ENCODE measurements at regions of chr9 and their contacts with region 1.

Region 1: DNA sequence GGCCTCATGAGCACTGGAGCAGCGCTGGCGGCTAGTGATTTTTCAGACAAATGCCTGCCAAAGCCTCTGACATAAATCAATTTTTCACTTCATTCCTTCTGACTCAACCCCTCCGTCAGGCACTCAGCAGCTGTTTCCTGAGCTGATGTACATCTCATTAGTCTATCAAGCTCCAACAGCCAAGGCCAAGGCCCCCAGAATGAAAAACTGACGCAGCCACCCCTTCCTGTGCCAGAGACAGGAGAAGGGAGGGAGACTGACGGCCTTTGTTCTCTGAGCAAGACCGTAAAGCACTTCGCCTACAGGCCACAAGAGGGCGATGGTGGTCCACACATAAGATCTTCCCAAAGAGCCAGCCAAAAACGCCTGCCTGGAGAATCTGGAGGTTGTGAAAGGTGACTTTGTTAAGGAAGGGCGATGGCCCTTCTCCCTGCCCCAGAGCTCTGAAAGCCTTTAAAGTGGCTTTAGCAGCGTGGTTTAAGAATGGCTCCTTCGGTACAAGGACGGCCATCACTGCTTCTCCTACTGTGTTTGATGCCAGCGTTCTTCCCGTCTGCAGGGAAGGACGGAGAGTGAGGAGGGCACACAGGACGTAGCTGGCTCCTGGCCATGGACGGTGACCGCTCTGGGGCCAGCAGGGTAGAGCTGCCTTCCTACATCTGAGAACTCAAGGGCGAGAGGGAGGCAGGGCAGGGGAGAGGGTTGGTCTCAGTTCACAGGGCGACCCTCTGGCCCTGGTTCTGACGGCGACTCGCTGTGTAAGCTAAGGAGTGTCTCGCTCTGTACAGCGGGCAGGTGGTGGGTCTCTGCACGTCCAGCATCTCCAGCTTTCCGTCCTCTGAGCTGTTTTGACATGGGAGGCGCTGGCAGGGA is 37.0 kb downstream of the ALG2 start:
- DNase-seq: peak; percentile 85
- ATAC-seq: peak; percentile 91
- H3K4me3 ChIP-seq: peak overlapping the region; percentile 50; the same call in 1 of the 2 replicates
- H3K27ac ChIP-seq: no peak overlapping the region
- H3K4me1 ChIP-seq: 0 out of 2 replicates have a peak, but pooled peaks cover 5% of the 10 kb centered on the region
- H3K27me3 ChIP-seq: 0 out of 2 replicates have a peak, but pooled peaks cover 3% of the 10 kb centered on the region
- CTCF ChIP-seq: peak; percentile 80

Region 2: DNA sequence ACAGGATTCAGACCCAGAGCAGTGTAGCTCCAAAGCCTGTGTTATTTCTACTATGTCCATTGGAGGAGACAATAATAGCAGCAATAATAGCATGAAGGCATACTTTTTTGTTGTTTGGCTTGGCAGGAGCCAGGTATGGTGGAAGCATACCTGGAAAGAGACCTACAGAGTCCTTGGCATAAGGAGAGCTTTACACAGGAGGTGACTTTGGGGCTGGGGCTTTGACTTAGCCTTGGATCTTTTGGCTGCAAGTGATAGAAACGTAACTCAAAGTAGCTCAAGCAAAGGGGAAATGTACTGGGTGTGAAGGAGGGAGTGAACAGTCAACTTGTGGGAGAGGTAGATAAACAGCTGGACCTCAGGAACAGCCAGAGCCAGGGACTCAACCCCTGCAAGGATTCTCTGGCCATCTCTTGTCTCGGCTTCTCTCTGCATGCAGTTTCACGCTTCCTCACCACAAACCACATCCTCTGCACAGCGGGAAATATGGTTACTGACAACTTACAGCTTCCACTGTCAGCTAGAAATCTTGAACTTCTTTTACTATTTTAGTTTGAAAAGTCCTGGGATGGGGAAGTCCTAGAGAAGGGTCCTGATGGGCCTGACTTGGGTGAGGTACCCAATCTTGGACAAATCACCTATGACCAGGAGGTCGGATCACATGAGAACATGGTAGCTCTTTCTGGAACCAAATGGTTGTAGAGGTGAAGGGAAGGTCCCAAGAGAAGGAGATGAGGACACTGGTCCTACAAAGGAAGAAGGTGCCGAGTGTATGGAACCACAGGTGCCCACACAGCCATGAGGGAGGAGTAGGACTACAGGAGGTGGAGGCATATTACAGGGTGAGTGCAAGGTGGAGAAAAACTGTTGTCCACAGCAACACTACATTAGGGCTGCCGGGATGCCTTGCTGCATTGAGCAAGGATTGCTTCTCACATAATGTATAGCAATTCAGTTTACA is 126.8 kb before region 1 on chr9:
- CTCF ChIA-PET with region 1: no interaction called
- POLR2A ChIA-PET with region 1: no interaction called
- intact Hi-C with region 1: no loop called
- DNase-seq: peak; percentile 52
- ATAC-seq: peak; percentile 41; the same call in 1 of the 2 replicates
- H3K4me3 ChIP-seq: no peak overlapping the region; the same call in 1 of the 2 replicates
- H3K27ac ChIP-seq: peak overlapping the region; percentile 96
- H3K4me1 ChIP-seq: peaks cover 64% of the 10 kb centered on the region
- H3K27me3 ChIP-seq: no peaks in the 10 kb centered on the region
- CTCF ChIP-seq: no peak

Region 3: GRCh38 chr9:99266255-99267023 is 81.7 kb after region 1 on chr9:
- CTCF ChIA-PET with region 1: no interaction called
- POLR2A ChIA-PET with region 1: no interaction called
- intact Hi-C with region 1: loop called (anchors 1 kb)
- DNase-seq: peak; percentile 53
- ATAC-seq: peak; percentile 31; the same call in 1 of the 2 replicates
- H3K4me3 ChIP-seq: no peak overlapping the region
- H3K27ac ChIP-seq: no peak overlapping the region
- H3K4me1 ChIP-seq: peaks cover 3% of the 10 kb centered on the region; the same call in 1 of the 2 replicates
- H3K27me3 ChIP-seq: no peaks in the 10 kb centered on the region
- CTCF ChIP-seq: peak; percentile 82